Breast epithelium (tissue), 4 donors: ENCODE measurements at regions of chr2 and their contacts with region 1.

Region 1: GRCh38 chr2:140186313-140186712 is 1406.1 kb upstream of the NXPH2 start:
- DNase-seq: no peak
- H3K4me3 ChIP-seq: no peak overlapping the region
- H3K27ac ChIP-seq: no peak overlapping the region
- H3K4me1 ChIP-seq: no peaks in the 10 kb centered on the region
- H3K27me3 ChIP-seq: no peaks in the 10 kb centered on the region
- CTCF ChIP-seq: no peak
- POLR2A ChIP-seq: no peak

Region 2: GRCh38 chr2:139055202-139055601 is 1131.1 kb before region 1 on chr2:
- intact Hi-C with region 1: loop called (anchors 5 kb)
- DNase-seq: no peak
- H3K4me3 ChIP-seq: no peak overlapping the region
- H3K27ac ChIP-seq: no peak overlapping the region
- H3K4me1 ChIP-seq: no peaks in the 10 kb centered on the region
- H3K27me3 ChIP-seq: no peaks in the 10 kb centered on the region
- CTCF ChIP-seq: no peak
- POLR2A ChIP-seq: no peak

Region 3: GRCh38 chr2:140144611-140145010 is 41.7 kb before region 1 on chr2:
- intact Hi-C with region 1: no loop called
- DNase-seq: no peak
- H3K4me3 ChIP-seq: no peak overlapping the region
- H3K27ac ChIP-seq: no peak overlapping the region
- H3K4me1 ChIP-seq: no peaks in the 10 kb centered on the region
- H3K27me3 ChIP-seq: no peaks in the 10 kb centered on the region
- CTCF ChIP-seq: no peak
- POLR2A ChIP-seq: no peak

Region 4: GRCh38 chr2:140338795-140339194 is 152.5 kb after region 1 on chr2:
- intact Hi-C with region 1: no loop called
- DNase-seq: no peak
- H3K4me3 ChIP-seq: no peak overlapping the region
- H3K27ac ChIP-seq: no peak overlapping the region
- H3K4me1 ChIP-seq: no peaks in the 10 kb centered on the region
- H3K27me3 ChIP-seq: no peaks in the 10 kb centered on the region
- CTCF ChIP-seq: no peak
- POLR2A ChIP-seq: no peak